ENCODE measurements at regions of chr6 and their contacts with region 1.

Region 1: GRCh38 chr6:79646006-79646405 is 14.9 kb downstream of the SH3BGRL2 start:
- DNase-seq: peak; percentile 33 to 61 (median 56)
- H3K4me3 ChIP-seq: no peak overlapping the region
- H3K27ac ChIP-seq: no peak overlapping the region
- H3K4me1 ChIP-seq: peaks cover 0 to 2% (median 0%) of the 10 kb centered on the region in 4 experiments
- H3K27me3 ChIP-seq: no peaks in the 10 kb centered on the region

Region 2: GRCh38 chr6:79630883-79631692 is 14.9 kb before region 1 on chr6 and contains the start of gene SH3BGRL2:
- CTCF ChIA-PET with region 1: interaction called, 22 read pairs
- POLR2A ChIA-PET with region 1: no interaction called
- DNase-seq: peak; percentile 55 to 72 (median 62)
- H3K4me3 ChIP-seq: peak within 1 kb of the TSS; percentile 73 to 90 (median 83)
- H3K27ac ChIP-seq: peak within 1 kb of the TSS in 1 of 2 experiments; percentile 51
- H3K4me1 ChIP-seq: peaks cover 0 to 36% (median 15%) of the 10 kb centered on the region in 4 experiments
- H3K27me3 ChIP-seq: peaks cover 0 to 9% (median 0%) of the 10 kb centered on the region in 5 experiments